ENCODE measurements at regions of chr3 and their contacts with region 1.

Region 1: DNA sequence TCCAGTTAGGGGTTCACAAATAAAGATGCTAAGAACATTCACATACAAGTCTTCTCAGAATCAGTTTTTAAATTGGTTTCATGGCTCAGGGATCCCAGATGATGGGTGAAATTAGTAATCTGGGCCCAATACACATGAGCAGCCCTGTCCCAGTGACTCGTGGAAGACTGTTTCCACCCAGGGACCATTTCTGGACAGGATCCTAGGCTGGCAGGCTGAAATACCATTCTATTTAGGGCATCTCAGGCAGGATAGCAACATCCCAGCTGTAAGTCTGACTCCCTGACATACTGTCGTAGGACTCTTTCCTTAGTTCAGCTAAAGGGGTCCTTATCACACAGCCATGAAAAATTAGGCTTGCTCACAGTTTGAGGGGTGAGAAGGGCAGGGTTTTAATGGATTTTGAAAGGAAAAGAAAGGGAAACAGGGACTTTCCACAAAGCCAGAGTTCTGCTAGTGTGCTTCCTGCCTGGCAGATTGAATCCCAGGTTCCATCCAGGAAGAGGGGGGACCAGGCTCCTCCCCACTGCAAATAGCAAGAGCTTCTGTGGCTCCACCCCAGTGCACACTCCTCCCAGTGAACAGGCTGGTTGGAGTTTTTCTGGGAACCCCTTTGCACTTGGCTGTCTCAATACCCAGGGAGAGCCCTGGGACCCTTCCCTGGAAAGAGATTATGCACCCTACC is 41.3 kb upstream of the LYZL4 start:
- DNase-seq: no peak

Region 2: DNA sequence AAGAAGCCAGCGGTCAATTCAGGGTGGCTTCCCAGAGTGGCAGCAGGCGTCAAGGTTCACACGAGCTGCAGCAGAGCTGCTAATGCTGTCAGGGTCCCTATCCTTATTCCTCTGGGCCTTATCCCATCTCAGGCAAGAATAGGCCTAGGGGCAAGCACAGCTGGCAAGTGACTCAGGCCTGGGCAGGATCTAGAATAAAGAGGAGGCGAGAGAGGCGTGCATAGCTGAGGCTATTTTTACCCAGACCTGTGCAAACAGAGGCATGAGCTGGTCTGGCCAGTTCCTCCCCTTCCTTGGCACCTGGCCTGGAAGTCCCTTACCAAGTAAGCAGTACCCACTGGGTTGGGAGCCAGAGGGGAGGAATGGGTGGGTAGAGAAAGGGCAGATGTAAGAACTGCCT is 38.6 kb after region 1 on chr3:
- intact Hi-C with region 1: loop called (anchors 5 kb)
- DNase-seq: peak; percentile 81

Region 3: DNA sequence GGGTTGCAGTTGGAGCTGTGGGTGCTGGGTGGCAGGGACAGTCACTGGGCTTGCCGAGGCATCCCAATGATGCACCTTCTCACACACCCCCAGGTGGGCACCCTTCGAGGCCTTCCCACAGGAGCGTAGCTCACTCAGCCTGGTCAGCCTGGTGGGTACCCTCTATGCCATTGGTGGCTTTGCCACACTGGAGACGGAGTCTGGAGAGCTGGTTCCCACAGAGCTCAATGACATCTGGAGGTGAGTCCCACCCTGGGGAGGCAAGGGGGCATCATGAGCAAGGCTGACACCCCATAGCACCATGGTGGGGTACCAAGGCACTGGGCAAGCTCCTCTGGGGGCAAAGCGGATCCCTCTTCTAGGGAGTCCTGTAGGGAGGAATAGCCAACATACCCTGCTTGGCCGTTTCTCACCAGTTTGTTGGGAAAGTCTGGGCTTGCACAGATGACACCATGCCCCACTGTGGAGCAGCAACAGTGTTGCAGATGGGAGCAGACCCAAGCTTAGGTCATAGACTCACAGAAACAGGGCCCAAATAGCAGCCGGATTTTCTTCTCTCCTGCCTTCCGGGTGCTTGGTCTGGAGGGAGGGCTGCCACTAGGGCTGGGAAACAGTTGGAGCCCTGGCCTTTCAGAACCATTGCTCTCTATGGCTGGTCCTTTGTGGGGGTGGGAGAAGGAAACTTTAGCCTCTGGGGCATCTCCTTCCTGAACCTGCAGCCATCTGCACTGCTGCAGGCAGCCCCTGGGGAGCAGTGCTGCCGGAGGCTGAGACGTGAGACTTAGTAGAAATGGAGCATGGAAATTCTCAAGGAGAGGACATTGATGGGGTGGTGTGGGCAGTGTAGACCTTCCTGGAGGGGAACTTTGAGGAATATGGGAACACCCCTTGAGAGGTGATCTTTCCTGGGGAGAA is 239.3 kb after region 1 on chr3:
- intact Hi-C with region 1: no loop called
- DNase-seq: peak; percentile 63

Measured in cardiac septum (tissue), 1 donor.